B cell (primary cell): ENCODE measurements at regions of chr7 and their contacts with region 1.

Region 1: DNA sequence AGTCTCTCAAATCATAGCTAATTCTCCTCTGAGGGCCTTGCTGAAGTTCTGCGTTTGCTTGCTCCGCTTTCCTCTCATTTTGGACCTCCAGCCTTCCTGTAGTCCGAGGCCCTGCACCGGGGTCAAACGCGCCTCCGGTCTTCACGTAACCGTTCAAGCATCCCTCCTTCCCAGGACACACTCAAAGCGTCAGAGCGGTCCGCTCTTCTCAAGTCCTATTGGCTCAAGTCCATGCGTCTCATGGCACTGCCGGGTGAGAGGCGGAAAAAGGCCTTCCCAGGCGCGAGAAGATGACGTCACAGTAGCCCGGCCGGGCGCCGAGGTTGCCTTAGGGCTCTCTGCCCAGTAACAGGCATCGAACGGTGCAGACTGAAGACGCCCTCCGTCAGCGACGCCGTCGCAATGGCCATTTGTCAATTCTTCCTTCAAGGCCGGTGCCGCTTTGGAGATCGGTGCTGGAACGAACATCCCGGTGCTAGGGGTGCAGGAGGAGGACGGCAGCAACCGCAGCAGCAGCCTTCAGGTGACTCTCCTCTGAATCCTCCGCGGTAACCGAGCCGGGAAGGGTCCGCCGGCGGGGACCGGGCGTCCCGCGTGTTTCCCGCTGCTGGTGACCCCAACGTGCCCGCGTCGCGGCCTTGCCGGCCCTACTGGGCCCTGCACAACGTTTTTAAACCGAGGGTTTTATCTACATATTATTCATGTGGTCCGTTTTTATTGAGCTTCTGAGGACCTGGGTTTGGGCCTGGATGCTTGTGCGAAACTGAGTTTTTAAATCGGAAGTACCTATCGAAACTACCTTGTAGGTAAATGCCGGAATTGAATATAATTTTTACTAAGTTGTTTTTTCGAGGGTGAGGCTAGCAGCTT is at the start of gene NUP42:
- DNase-seq: peak; percentile 98
- ATAC-seq: peak; percentile 89
- H3K4me3 ChIP-seq: peak within 1 kb of the TSS; percentile 77 to 99 (median 87)
- H3K4me3 Mint-ChIP-seq: peak within 1 kb of the TSS; percentile 96
- H3K27ac ChIP-seq: peak within 1 kb of the TSS; percentile 92 to 98
- H3K27ac Mint-ChIP-seq: peak within 1 kb of the TSS; percentile 98
- H3K4me1 ChIP-seq: peaks cover 17 to 20% of the 10 kb centered on the region in 2 donors
- H3K4me1 Mint-ChIP-seq: peaks cover 37% of the 10 kb centered on the region
- H3K27me3 ChIP-seq: no peaks in the 10 kb centered on the region
- H3K27me3 Mint-ChIP-seq: no peaks in the 10 kb centered on the region
- CTCF ChIP-seq: no peak
- total RNA-seq, gene NUP42: 49.2 and 58.8 TPM in 2 replicates

Region 2: GRCh38 chr7:22854158-22855048 is 327.5 kb before region 1 on chr7:
- CTCF ChIA-PET with region 1: no interaction called
- POLR2A ChIA-PET with region 1: interaction called, 3 read pairs
- intact Hi-C with region 1: loop called (anchors 1 kb)
- DNase-seq: peak; percentile 88
- ATAC-seq: peak; percentile 83
- H3K4me3 ChIP-seq: peak overlapping the region; percentile 74 to 87 (median 80)
- H3K4me3 Mint-ChIP-seq: peak overlapping the region; percentile 97
- H3K27ac ChIP-seq: peak overlapping the region; percentile 71 to 87
- H3K27ac Mint-ChIP-seq: peak overlapping the region; percentile 94
- H3K4me1 ChIP-seq: peaks cover 17 to 27% of the 10 kb centered on the region in 2 donors
- H3K4me1 Mint-ChIP-seq: peaks cover 38% of the 10 kb centered on the region
- H3K27me3 ChIP-seq: no peaks in the 10 kb centered on the region
- H3K27me3 Mint-ChIP-seq: no peaks in the 10 kb centered on the region
- CTCF ChIP-seq: peak; percentile 84

Region 3: DNA sequence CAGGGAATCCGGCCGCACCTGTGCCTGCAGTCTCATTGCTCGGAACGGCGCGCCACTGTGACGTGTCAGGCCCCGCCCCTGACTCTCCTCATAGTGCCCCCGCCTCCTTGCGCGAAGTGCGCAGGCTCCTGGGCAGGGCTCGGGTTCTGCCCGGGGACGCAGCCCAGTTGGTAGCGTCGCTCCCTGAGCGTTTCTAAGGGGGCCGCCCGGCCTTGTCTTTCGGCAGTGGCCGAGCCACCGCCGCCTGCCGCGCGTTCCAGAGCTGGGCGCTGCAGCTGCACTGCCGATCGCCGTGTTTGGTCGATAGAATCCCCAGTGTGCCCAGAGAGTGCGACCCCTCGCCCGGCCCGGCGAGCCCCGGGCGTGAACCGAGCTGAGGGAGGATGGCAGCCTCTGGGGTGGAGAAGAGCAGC is 76.3 kb before region 1 on chr7 and contains the start of gene KLHL7:
- CTCF ChIA-PET with region 1: interaction called, 15 read pairs
- POLR2A ChIA-PET with region 1: interaction called, 17 read pairs
- intact Hi-C with region 1: loop called (anchors 1 kb)
- DNase-seq: peak; percentile 96
- ATAC-seq: peak; percentile 96
- H3K4me3 ChIP-seq: peak within 1 kb of the TSS; percentile 86 to 99 (median 94)
- H3K4me3 Mint-ChIP-seq: peak within 1 kb of the TSS; percentile 99
- H3K27ac ChIP-seq: peak within 1 kb of the TSS; percentile 88 to 95
- H3K27ac Mint-ChIP-seq: peak within 1 kb of the TSS; percentile 97
- H3K4me1 ChIP-seq: peaks cover 15 to 16% of the 10 kb centered on the region in 2 donors
- H3K4me1 Mint-ChIP-seq: peaks cover 32% of the 10 kb centered on the region
- H3K27me3 ChIP-seq: no peaks in the 10 kb centered on the region
- H3K27me3 Mint-ChIP-seq: no peaks in the 10 kb centered on the region
- CTCF ChIP-seq: no peak
- total RNA-seq, gene KLHL7: 22.8 and 29.5 TPM in 2 replicates

Region 4: DNA sequence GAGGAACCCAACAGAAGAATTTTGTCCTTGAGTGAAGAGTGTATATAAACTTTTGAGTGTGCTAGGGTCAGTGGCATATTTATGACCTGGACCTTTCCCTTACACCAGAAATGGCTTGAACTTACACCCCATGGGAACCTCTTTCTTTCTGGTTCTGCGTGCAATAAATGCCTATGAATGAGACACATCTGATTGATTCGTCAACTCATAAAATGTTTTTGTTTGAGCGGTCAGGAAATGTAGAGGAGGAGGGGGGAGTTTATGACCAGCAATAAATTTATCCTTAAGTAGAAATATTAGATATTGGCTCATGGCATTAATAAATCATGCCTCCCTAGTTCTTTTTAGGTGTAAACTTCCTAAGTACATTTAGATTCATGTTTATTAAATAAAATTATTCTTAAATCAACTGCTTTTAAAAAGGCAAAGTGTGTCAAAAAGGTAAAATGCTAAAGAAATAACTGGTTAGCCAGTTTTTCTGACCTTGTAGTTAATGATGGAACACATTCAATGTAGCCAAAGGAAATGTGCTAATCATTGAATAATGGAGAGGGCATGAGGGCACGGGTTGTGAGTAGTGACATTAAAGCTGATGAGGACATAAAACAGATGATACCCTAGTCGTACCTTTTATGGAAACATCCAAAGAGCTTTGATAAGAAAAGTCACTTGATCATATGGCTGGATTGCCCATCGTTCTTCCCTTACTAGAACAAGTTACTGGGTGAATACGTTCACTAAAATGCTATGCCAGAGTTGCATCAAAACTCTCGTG is 13.6 kb before region 1 on chr7:
- CTCF ChIA-PET with region 1: no interaction called
- POLR2A ChIA-PET with region 1: no interaction called
- intact Hi-C with region 1: no loop called
- DNase-seq: no peak
- ATAC-seq: no peak
- H3K4me3 ChIP-seq: no peak overlapping the region
- H3K4me3 Mint-ChIP-seq: no peak overlapping the region
- H3K27ac ChIP-seq: no peak overlapping the region
- H3K27ac Mint-ChIP-seq: no peak overlapping the region
- H3K4me1 ChIP-seq: no peaks in the 10 kb centered on the region
- H3K4me1 Mint-ChIP-seq: no peaks in the 10 kb centered on the region
- H3K27me3 ChIP-seq: no peaks in the 10 kb centered on the region
- H3K27me3 Mint-ChIP-seq: no peaks in the 10 kb centered on the region
- CTCF ChIP-seq: no peak

Region 5: DNA sequence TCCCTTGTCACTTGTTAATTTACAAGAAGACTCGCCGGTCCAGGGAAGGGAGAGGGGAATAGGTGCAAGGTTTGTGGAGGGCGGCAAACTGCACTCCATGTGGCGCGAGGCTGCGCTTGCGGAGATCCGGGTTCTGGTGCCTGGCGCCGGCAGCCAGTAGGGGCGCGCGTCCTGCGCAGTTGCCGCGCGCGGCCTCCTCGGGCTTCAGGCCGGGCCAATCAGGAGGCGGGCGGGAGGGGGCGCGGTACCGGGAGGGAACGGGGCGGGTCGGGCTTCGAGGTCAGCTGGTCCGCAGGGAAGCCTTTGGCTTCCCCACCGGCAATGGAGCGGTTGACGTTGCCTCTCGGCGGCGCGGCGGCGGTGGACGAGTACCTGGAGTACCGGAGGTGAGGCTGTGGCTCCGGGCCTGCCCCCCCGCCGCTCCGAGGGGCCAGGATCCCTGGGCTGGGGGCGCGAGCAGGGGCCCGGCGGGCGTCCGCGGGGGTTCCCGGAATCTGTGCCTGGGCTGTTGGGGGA is 498.0 kb after region 1 on chr7 and contains the start of gene FAM221A:
- CTCF ChIA-PET with region 1: no interaction called
- POLR2A ChIA-PET with region 1: no interaction called
- intact Hi-C with region 1: loop called (anchors 5 kb)
- DNase-seq: peak; percentile 89
- ATAC-seq: peak; percentile 99
- H3K4me3 ChIP-seq: peak within 1 kb of the TSS; percentile 51 to 85 (median 75)
- H3K4me3 Mint-ChIP-seq: peak within 1 kb of the TSS; percentile 90
- H3K27ac ChIP-seq: peak within 1 kb of the TSS in 1 of 2 donors; percentile 57
- H3K27ac Mint-ChIP-seq: peak within 1 kb of the TSS; percentile 81
- H3K4me1 ChIP-seq: peaks cover 0 to 15% of the 10 kb centered on the region in 2 donors
- H3K4me1 Mint-ChIP-seq: peaks cover 9% of the 10 kb centered on the region
- H3K27me3 ChIP-seq: no peaks in the 10 kb centered on the region
- H3K27me3 Mint-ChIP-seq: no peaks in the 10 kb centered on the region
- CTCF ChIP-seq: peak; percentile 80
- total RNA-seq, gene FAM221A: 10.7 and 10.8 TPM in 2 replicates

Region 6: DNA sequence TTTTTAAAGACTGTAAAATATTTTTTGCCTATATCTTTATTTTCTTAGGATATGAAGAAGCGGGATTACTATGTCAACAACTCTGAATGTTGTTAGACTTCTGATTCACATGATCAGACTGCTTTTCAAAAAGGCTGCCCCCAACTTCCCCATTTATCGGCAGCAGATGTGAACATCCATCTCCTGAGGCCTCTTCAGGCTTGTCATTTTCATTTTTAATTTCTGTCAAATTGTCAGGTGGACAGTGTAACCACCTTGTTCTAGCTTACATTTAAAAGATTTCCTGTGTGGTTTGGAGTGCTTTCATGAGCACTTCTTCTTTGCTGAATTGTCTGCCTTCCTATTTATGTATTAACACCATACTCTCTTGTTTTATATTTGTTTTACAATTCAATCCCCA is 1654.2 kb after region 1 on chr7:
- CTCF ChIA-PET with region 1: no interaction called
- POLR2A ChIA-PET with region 1: no interaction called
- intact Hi-C with region 1: loop called (anchors 10 kb)
- DNase-seq: peak; percentile 89
- ATAC-seq: peak; percentile 80
- H3K4me3 ChIP-seq: peak overlapping the region in 1 of 5 experiments; percentile 46
- H3K4me3 Mint-ChIP-seq: peak overlapping the region; percentile 80
- H3K27ac ChIP-seq: peak overlapping the region; percentile 97
- H3K27ac Mint-ChIP-seq: peak overlapping the region; percentile 98
- H3K4me1 ChIP-seq: peaks cover 72 to 74% of the 10 kb centered on the region in 2 donors
- H3K4me1 Mint-ChIP-seq: peaks cover 75% of the 10 kb centered on the region
- H3K27me3 ChIP-seq: no peaks in the 10 kb centered on the region
- H3K27me3 Mint-ChIP-seq: no peaks in the 10 kb centered on the region
- CTCF ChIP-seq: no peak